SK-N-SH (cell line): ENCODE measurements at regions of chr15 and their contacts with region 1.

Region 1: GRCh38 chr15:98401029-98401428 is 247.3 kb upstream of the IGF1R start:
- DNase-seq: no peak
- H3K4me3 ChIP-seq: no peak overlapping the region
- H3K27ac ChIP-seq: no peak overlapping the region
- H3K4me1 ChIP-seq: no peaks in the 10 kb centered on the region
- H3K27me3 ChIP-seq: peaks cover 10% of the 10 kb centered on the region; the same call in 1 of the 2 replicates
- CTCF ChIP-seq: no peak
- EP300 ChIP-seq: no peak
- RAD21 ChIP-seq: no peak

Region 2: DNA sequence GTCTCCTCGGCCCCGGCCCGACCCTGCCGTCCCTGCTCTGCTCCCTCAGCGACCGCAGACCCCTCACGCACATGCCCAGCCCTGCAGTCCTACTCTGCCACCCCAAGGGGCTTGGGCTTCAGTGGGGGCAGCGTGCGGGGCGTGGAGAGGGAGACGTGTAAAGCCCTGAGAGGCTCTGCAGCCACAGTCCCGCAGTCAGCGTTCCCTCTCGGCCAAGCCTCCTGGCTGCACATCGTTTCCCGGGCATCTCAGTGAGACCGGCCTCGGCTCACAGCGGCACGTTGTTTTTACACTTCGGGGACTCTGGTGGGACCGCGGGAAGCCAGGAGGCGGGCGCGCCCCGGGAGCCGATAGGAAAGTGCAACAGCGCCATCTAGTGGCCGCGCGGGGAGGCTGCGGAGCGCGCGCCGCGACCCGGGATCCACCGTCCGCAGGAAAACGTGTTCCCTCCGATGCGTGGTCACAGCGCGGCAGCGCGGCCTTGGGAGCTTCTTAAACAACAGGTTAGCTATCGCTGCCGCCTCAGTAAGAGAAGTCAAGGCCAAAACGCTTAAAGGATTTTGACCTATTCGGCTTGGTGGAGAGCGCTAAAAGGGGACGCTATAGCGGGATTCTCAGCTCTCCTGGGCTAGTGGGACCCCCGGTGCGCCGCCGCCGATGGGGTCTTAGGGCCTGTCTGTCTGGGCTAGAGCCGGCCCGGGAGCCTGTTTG is 20.5 kb after region 1 on chr15:
- CTCF ChIA-PET with region 1: interaction called, 19 read pairs
- POLR2A ChIA-PET with region 1: no interaction called
- DNase-seq: peak; percentile 92
- H3K4me3 ChIP-seq: peak overlapping the region; percentile 26 to 47; a peak in 3 of 4 replicates
- H3K27ac ChIP-seq: no peak overlapping the region
- H3K4me1 ChIP-seq: peaks cover 0 to 4% of the 10 kb centered on the region in 2 experiments; a peak in 1 of 4 replicates
- H3K27me3 ChIP-seq: peaks cover 83% of the 10 kb centered on the region
- CTCF ChIP-seq: peak; percentile 88
- EP300 ChIP-seq: no peak
- RAD21 ChIP-seq: peak; percentile 78